ENCODE measurements at regions of chr1 and their contacts with region 1.

Region 1: GRCh38 chr1:59150577-59151391 is 146.1 kb upstream of the FGGY start:
- DNase-seq: peak; percentile 98
- H3K4me3 ChIP-seq: peak overlapping the region; percentile 44
- CTCF ChIP-seq: no peak

Region 2: GRCh38 chr1:59076612-59077011 is 74.2 kb before region 1 on chr1:
- CTCF ChIA-PET with region 1: no interaction called
- POLR2A ChIA-PET with region 1: no interaction called
- DNase-seq: no peak
- H3K4me3 ChIP-seq: no peak overlapping the region
- CTCF ChIP-seq: peak; percentile 5

Region 3: GRCh38 chr1:59163268-59164092 is 12.7 kb after region 1 on chr1:
- CTCF ChIA-PET with region 1: interaction called, 4 read pairs
- POLR2A ChIA-PET with region 1: interaction called, 10 read pairs
- DNase-seq: peak; percentile 78
- H3K4me3 ChIP-seq: no peak overlapping the region
- CTCF ChIP-seq: no peak